ENCODE measurements at regions of chr20 and their contacts with region 1.

Region 1: GRCh38 chr20:52083627-52084232 is 107.8 kb downstream of the ZFP64 start:
- DNase-seq: peak; percentile 75
- H3K4me3 Mint-ChIP-seq: no peak overlapping the region
- H3K27ac Mint-ChIP-seq: no peak overlapping the region
- H3K4me1 Mint-ChIP-seq: peaks cover 11% of the 10 kb centered on the region
- H3K27me3 Mint-ChIP-seq: no peaks in the 10 kb centered on the region
- CTCF ChIP-seq: peak; percentile 84

Region 2: DNA sequence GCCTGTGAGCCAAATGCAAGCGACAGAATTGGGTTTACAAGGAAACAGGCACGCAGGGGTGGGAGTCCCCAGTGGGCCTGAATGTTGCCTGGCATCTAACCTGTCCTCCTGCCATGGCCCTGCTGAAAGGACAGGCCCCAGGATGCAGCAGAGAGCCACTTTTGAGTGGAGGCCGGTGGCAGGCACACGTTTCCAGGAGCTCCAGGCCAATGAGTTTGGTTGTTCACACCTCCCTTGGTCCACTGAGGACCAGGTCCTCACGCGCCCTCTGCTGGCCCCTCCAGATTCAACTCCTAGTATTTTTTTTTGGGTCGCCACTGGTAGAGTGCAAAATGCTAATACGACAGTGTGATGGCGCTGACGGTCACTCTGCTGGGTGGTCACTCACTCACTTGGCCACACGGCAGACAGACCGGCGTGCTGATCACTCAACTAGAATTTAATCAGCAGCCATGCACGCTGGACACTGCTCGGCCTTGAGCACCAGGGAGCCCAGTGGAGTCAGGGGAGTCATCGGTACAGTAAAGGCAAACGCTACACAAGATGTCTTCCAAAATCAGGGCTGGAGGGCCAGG is 459.5 kb before region 1 on chr20:
- CTCF ChIA-PET with region 1: interaction called, 14 read pairs
- POLR2A ChIA-PET with region 1: no interaction called
- intact Hi-C with region 1: no loop called
- DNase-seq: peak; percentile 79
- H3K4me3 Mint-ChIP-seq: no peak overlapping the region
- H3K27ac Mint-ChIP-seq: no peak overlapping the region
- H3K4me1 Mint-ChIP-seq: no peaks in the 10 kb centered on the region
- H3K27me3 Mint-ChIP-seq: no peaks in the 10 kb centered on the region
- CTCF ChIP-seq: peak; percentile 58

Region 3: DNA sequence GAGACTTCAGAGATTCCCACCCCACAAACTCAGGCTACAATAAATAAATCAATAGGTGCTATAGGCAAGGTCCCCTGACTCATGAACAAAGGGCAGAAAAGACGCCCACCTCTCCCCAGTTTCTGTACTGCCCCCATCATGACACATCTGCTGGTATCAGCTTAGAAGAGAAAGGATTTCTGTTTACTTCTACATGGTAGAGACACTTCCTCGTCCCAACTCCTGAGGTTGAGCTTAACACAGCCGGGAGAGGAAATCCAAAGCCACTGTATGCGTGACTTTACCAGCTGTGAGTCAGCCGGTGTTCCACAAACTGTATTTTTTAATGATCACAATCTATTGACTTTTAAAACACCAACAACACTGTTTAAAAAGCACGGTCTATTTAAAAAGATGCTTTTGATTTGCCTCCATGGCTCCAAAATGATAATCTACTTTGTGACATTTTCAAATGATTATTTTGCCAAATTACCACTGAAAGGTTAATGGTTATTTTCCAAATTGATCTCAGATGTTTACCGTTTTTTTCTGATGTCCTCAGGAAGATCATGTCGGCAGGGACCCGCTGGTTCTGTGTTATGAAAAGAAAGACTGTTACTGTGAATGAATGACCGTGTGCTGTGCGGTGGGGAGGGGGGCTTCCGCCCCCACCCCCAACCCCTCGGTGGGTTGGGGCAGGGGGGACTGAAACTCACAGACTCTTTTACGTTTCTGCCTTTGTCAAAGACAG is 388.0 kb before region 1 on chr20:
- CTCF ChIA-PET with region 1: interaction called, 36 read pairs
- POLR2A ChIA-PET with region 1: interaction called, 6 read pairs
- intact Hi-C with region 1: loop called (anchors 1 kb)
- DNase-seq: peak; percentile 39
- H3K4me3 Mint-ChIP-seq: no peak overlapping the region
- H3K27ac Mint-ChIP-seq: peak overlapping the region; percentile 61
- H3K4me1 Mint-ChIP-seq: peaks cover 21% of the 10 kb centered on the region
- H3K27me3 Mint-ChIP-seq: no peaks in the 10 kb centered on the region
- CTCF ChIP-seq: no peak

Region 4: GRCh38 chr20:51966291-51966971 is 117.3 kb before region 1 on chr20:
- CTCF ChIA-PET with region 1: interaction called, 12 read pairs
- POLR2A ChIA-PET with region 1: no interaction called
- intact Hi-C with region 1: loop called (anchors 1 kb)
- DNase-seq: peak; percentile 79
- H3K4me3 Mint-ChIP-seq: no peak overlapping the region
- H3K27ac Mint-ChIP-seq: no peak overlapping the region
- H3K4me1 Mint-ChIP-seq: no peaks in the 10 kb centered on the region
- H3K27me3 Mint-ChIP-seq: no peaks in the 10 kb centered on the region
- CTCF ChIP-seq: peak; percentile 57

Region 5: GRCh38 chr20:52060794-52061714 is 22.7 kb before region 1 on chr20:
- CTCF ChIA-PET with region 1: interaction called, 20 read pairs
- POLR2A ChIA-PET with region 1: interaction called, 4 read pairs
- intact Hi-C with region 1: no loop called
- DNase-seq: peak; percentile 33
- H3K4me3 Mint-ChIP-seq: no peak overlapping the region
- H3K27ac Mint-ChIP-seq: no peak overlapping the region
- H3K4me1 Mint-ChIP-seq: peaks cover 9% of the 10 kb centered on the region
- H3K27me3 Mint-ChIP-seq: no peaks in the 10 kb centered on the region
- CTCF ChIP-seq: peak; percentile 32